Dendritic cell treated with granulocyte-macrophage colony-stimulating factor and Interleukin-4, amounts not matched to agents 40 ng/mL and 50 ng/mL, for 4 days (primary cell): ENCODE measurements at regions of chr2 and their contacts with region 1.

Region 1: DNA sequence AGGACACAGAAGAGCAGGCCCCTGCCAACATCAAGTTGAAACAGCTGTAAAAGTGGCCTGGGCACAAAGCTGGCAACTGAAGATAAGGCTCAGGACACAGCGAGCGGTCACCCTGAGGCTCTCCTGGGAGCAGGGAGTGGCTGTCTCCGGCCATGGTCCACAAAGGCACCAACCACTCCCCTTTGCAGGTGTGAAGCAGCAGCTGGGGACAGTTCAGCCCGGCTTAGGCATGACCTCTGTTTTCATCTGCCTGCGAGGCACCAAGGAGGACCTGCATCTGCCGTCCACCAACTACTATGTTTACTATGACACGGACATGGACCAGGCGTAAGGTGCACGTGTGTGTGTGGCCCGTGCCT is 12.9 kb downstream of the TGOLN2 start:
- H3K4me3 Mint-ChIP-seq: no peak overlapping the region
- H3K27ac Mint-ChIP-seq: no peak overlapping the region
- H3K4me1 Mint-ChIP-seq: peaks cover 38% of the 10 kb centered on the region
- H3K27me3 Mint-ChIP-seq: no peaks in the 10 kb centered on the region

Region 2: DNA sequence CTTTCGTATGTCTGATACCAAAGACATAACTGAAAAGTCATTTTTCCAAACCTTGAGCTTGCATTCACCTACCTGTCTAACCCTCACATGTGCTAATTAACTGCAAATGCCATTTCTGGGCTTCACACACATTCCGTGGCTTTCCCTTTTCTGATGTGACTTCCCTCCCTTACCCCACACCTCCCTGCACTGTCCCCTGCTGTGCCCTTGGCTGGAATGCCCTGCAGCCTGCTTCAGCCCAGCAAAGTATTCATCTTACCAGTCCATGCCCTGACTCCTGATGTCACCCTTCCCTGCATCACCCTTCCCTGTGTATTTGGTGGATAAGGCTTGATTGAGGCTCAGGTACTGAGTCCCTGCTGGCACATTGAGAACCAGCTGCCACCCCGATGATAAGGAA is 27.3 kb after region 1 on chr2:
- intact Hi-C with region 1: loop called (anchors 2 kb)
- H3K4me3 Mint-ChIP-seq: no peak overlapping the region
- H3K27ac Mint-ChIP-seq: no peak overlapping the region
- H3K4me1 Mint-ChIP-seq: no peaks in the 10 kb centered on the region
- H3K27me3 Mint-ChIP-seq: peaks cover 7% of the 10 kb centered on the region